Colonic mucosa (tissue), 4 donors: ENCODE measurements at regions of chr3 and their contacts with region 1.

Region 1: GRCh38 chr3:172355839-172356238 is 92.4 kb downstream of the GHSR start:
- DNase-seq: peak; percentile 34
- H3K4me3 ChIP-seq: no peak overlapping the region
- H3K27ac ChIP-seq: no peak overlapping the region
- H3K4me1 ChIP-seq: no peaks in the 10 kb centered on the region
- H3K27me3 ChIP-seq: no peaks in the 10 kb centered on the region
- CTCF ChIP-seq: no peak

Region 2: DNA sequence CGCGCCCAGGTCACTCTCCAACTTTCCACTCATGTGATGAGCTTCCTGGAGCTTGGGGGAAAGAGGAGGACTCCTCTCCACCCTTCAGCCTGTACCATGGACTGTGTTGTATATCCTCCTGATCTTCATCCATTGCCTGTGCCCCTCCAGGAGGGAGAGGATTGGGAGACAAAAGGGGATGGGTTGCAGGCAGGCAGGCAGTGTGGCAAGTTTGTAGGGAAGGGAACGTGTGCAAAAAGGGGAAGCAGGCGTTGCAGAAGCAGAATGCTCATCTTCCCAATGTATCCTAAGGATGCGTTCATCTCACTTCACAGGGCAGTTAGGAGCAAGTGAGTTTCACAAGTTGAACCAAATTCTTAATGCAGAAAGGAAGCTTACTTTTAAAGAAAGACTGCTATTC is 120.5 kb after region 1 on chr3:
- intact Hi-C with region 1: loop called (anchors 10 kb)
- DNase-seq: no peak
- H3K4me3 ChIP-seq: no peak overlapping the region
- H3K27ac ChIP-seq: no peak overlapping the region
- H3K4me1 ChIP-seq: no peaks in the 10 kb centered on the region
- H3K27me3 ChIP-seq: no peaks in the 10 kb centered on the region
- CTCF ChIP-seq: no peak

Region 3: DNA sequence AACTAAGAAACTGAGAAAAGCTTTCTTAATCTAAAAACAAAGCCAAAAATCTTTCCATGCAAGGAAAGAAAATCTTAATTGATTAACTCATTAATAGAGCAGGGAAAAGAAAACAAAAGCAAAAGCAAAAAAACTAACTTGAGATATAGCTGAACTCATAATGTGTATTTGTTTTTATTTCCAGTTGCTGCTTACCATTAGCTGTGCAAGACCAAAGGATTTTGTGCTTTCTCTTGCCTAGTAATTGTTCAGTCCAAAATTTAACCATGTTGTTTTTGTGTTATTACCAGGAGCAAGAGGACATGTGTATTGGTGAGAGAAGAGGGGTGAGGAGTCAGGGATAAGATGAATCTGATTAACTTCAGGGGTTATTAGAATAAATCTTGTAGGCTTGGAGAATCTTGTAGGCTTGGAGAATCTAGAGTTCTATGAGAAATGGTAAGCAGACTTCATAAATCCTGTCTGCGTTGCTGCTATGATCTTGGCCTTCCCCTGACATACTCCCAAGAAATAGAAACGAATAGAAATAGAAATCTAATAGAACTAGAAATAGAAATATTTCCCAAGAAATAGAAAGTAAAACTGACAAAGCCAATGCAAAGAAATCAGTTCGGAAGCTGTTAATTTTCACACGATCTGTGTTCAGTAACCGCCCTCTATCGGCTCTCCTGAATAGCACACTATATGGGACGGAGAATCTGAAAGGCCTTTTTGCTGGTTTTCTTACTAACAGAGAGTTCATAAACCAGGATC is 240.0 kb after region 1 on chr3:
- intact Hi-C with region 1: no loop called
- DNase-seq: peak; percentile 67
- H3K4me3 ChIP-seq: peak overlapping the region; percentile 6
- H3K27ac ChIP-seq: peak overlapping the region; percentile 78
- H3K4me1 ChIP-seq: peaks cover 2% of the 10 kb centered on the region
- H3K27me3 ChIP-seq: no peaks in the 10 kb centered on the region
- CTCF ChIP-seq: peak; percentile 65